Esophagus muscularis mucosa (tissue), 4 donors: ENCODE measurements at regions of chr2 and their contacts with region 1.

Region 1: DNA sequence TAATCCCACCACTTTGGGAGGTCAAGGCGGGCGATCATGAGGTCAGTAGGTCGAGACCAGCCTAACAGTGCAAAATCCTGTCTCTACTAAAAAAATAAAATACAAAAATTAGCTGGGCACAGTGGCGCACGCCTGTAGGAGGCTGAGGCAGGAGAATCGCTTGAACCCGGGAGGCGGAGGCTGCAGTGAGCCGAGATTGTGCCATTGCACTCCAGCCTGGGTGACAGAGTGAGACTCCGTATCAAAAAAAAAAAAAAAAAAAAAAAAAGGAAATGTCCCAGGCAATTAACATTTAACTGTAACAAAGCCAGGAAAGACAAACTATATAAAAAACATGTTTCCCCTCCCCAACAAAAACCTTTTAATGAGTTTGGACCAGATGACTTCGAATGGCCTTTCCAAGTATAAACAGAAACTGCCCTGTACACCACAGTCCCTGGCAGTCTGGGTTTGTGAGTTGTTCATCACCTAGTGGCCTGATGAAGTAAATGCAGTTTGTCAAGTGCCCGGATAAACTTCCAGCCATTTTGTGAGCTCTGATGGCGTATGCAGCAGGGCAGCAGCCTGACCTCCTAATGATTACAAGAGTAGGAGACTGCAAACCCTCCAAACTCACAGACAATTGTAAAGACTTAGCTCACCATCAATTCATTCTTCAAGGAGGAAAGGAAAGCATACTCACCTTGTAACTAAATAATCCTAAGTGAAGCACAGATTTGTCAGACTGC is 16.6 kb upstream of the PCBP1 start:
- DNase-seq: no peak
- H3K4me3 ChIP-seq: peak overlapping the region in 2 of 4 donors; percentile 11 to 26
- H3K27ac ChIP-seq: peak overlapping the region; percentile 56 to 80 (median 78)
- H3K4me1 ChIP-seq: peaks cover 6 to 36% (median 27%) of the 10 kb centered on the region in 4 donors
- H3K27me3 ChIP-seq: no peaks in the 10 kb centered on the region
- CTCF ChIP-seq: peak; percentile 76 to 92 (median 90)
- EP300 ChIP-seq: no peak
- POLR2A ChIP-seq: no peak

Region 2: DNA sequence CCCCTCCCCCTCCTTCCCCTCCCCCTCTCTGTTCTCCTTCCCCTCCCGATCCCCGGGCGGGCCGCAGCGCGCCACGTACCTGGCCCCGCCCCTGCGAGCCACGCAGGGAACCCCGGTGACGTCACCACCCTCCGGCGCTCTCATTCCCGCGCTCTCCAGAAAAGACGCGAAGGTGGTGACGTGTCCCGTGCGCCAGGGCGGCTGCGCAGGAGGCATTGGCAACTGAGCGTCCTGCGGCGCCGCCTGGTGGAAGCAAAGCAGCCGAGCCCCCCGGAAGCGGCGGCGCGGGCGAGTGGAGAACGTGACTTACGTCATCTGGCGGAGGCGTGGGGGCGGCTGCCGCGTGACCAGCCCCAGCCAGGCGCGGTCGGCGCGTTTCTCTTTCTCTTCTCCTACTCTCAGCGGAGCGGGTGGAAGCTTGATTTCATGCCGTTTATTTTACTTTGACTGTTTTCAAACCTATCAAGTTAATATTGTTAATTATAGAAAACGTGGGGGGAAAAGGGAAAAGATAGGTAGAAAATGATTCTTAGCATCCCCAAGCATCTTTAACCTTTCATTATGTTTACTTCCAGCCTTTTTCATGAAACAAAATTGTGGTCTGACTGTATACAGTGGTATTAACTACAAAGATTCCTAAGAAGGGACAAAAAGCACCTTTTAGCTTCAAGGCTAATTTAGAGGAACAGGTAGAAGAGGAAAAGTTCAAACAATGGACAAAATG is 72.0 kb after region 1 on chr2:
- intact Hi-C with region 1: loop called (anchors 5 kb)
- DNase-seq: peak; percentile 100
- H3K4me3 ChIP-seq: peak overlapping the region; percentile 76 to 91 (median 78)
- H3K27ac ChIP-seq: peak overlapping the region; percentile 98 to 99 (median 99)
- H3K4me1 ChIP-seq: peaks cover 21 to 26% (median 23%) of the 10 kb centered on the region in 4 donors
- H3K27me3 ChIP-seq: no peaks in the 10 kb centered on the region
- CTCF ChIP-seq: peak; percentile 95 to 99 (median 98)
- EP300 ChIP-seq: no peak
- POLR2A ChIP-seq: peak; percentile 82

Region 3: DNA sequence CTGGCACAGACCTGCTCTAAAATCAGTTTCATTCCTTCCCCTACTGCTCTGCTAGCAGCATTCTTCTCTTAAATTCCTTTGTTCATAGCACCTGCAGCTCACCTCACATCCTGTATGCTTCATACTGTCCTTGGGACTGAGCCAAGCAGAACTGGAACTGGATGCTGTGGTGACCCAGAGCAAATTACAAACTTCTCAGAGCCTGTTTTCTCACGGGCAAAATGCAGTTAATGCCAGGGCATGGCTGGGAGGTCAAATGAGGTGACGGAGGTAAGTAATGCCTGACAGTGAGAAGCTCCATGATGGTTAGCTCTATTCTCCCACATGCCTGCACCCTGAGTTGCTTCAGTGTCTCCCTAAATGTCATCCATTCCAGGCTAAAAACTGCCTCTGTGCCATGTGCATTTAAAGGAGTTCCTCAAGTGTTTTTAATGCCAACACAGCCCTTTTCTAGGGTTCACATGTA is 90.4 kb after region 1 on chr2:
- intact Hi-C with region 1: no loop called
- DNase-seq: no peak
- H3K4me3 ChIP-seq: no peak overlapping the region
- H3K27ac ChIP-seq: no peak overlapping the region
- H3K4me1 ChIP-seq: no peaks in the 10 kb centered on the region
- H3K27me3 ChIP-seq: no peaks in the 10 kb centered on the region
- CTCF ChIP-seq: no peak
- EP300 ChIP-seq: no peak
- POLR2A ChIP-seq: no peak